ENCODE measurements at regions of chr10 and their contacts with region 1.

Region 1: DNA sequence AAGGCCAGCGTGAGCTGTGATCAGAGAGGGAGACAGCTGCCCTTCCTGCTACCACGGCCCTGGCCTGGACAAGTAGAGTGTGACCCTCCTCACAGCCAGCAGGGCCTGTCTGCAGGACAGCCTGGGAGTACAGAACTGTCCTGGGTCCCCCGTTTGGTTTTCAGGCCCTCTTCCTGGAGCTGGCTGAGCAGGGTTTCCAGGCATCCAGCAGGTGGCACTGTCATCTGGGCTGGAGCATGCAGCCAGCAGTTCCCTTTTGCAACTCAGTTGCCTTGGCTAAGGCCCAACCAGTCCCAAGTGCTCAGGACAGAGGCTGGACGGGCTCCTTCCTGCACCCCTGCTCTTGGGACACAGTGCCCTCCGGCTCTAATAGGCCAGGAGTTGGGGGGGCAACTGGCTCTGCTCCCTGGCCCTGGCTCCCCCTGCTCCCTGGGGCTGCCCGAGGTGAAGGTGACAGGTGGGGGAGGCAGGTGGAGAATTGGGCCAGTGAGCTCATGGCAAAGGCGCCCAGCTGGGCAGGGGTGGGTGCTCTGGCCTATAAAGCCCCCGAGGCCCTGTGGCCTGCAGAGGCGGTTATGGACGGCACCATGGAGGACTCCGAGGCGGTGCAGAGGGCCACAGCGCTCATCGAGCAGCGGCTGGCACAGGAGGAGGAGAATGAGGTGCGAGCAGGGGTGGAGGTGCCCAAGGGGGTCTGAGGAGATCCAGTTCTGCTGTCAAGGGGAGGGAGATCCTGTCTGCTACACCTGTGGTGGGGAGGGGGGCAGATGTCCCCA is at the start of gene ANKRD2:
- DNase-seq: no peak
- H3K4me3 ChIP-seq: no peak within 1 kb of the TSS
- CTCF ChIP-seq: peak; percentile 93

Region 2: GRCh38 chr10:97584060-97584797 is 11.8 kb after region 1 on chr10 and contains the start of gene HOGA1:
- CTCF ChIA-PET with region 1: interaction called, 35 read pairs
- POLR2A ChIA-PET with region 1: no interaction called
- DNase-seq: no peak
- H3K4me3 ChIP-seq: no peak within 1 kb of the TSS
- CTCF ChIP-seq: no peak

Region 3: GRCh38 chr10:97596101-97597062 is 24.0 kb after region 1 on chr10:
- CTCF ChIA-PET with region 1: interaction called, 35 read pairs
- POLR2A ChIA-PET with region 1: no interaction called
- DNase-seq: peak; percentile 53
- H3K4me3 ChIP-seq: no peak overlapping the region
- CTCF ChIP-seq: no peak

Measured in AG04449 (cell line).